Activated CD4-positive, alpha-beta T cell treated with anti-CD3 and anti-CD28 coated beads for 36 hours (primary cell): ENCODE measurements at regions of chr2 and their contacts with region 1.

Region 1: DNA sequence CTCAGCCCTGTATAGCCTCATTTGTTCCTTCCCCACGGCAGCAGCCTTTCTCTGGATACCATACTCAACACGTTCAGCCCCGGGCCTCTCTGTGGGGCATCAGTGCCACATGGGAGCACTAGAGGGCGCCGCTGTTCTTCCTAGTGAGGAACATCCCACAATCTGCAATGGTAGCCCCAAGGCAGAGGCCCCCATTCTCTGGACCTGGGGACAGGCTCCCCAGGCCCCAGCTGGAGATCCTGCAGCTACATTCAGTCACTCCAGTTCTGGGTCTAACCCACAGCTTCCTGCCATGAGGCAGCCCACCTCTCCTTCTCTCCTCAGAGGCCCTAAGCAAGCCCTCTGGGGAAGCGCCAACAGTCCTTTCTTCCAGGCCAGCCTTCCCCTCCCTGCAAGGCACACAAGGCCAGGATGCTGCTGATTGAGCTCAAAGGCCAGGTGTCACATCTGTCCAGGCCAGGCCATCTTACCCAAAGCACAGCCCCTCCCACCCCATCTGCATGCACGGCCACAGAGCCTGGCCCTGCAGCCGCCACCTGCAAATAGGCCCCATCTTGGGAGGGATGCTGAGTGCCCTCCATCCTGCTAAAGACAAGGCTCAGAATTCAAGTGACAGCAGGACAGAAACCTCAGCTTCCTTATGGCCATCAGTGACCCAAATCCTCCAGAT is 14.3 kb upstream of the SFXN5 start:
- DNase-seq: peak; percentile 91
- ATAC-seq: peak; percentile 98
- H3K4me3 Mint-ChIP-seq: no peak overlapping the region
- H3K27ac Mint-ChIP-seq: no peak overlapping the region
- H3K4me1 Mint-ChIP-seq: no peaks in the 10 kb centered on the region
- H3K27me3 Mint-ChIP-seq: no peaks in the 10 kb centered on the region

Region 2: DNA sequence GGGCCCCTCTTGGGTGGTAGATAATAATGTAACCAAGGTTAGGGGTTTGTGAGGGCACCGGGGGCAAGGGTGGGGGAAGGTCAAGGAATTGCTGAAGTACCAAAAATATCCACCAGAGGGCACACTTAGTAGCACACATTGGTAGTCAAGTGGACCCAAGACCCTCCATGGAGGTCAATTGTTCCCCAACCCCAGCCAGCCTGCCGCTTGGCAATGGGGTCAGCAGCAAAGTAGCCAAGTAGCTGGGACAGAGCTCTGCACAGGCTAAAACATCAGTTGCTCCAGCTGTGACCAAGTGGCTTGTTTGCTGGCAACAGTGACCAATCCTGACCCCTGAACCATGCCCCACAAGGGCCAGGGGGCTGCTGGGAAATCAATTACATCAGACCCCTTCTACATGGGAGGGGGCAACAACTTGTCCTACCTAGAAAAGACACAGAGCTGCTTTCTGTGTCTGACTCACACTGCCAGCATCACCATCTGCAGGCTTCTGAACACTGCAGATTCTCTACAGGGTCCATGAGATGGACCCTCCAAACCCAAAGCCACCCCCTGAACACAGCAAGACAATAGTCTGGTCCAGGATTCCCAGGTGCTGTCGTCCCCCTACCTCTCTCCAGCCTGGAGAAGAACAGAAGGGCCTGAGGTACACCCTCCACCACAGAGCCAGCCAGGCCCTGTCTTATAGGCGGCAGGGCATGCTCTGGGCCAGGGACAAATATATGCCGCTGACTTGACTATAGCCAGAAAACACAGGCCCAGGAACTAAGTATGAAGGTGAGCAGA is 92.5 kb before region 1 on chr2:
- CTCF ChIA-PET with region 1: interaction called, 5 read pairs
- POLR2A ChIA-PET with region 1: no interaction called
- intact Hi-C with region 1: loop called in 1 of 2 experiments (anchors 5 kb)
- DNase-seq: peak; percentile 50
- ATAC-seq: peak; percentile 42
- H3K4me3 Mint-ChIP-seq: no peak overlapping the region
- H3K27ac Mint-ChIP-seq: no peak overlapping the region
- H3K4me1 Mint-ChIP-seq: no peaks in the 10 kb centered on the region
- H3K27me3 Mint-ChIP-seq: no peaks in the 10 kb centered on the region

Region 3: DNA sequence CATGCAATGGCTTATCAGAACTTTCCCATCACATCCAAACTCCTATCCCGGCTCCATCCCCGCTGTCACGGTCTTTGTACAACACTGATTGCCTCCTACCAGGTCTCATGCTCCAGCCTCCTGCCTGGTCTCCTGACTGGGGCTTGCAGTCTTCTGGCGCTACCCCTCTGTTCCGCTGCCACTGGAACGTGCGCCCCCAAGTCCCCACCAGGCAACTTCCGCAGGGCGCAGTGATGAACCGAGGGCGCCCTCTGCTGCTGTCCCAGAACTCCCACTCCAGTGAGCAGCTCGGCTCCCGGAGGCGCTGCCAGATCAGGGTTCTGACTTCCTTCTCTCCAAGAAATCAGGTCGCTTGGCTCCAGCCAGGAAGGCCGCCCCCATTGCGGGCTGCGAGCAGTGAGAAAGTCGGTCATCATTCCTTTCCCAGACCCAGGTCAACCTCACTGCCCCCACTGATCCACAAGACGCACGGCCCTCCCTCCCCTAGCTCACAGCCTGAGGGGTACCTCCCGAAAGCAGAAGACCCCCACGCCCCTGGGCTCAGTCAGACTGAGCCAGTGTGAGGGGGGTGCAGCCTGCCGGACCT is 70.8 kb after region 1 on chr2:
- CTCF ChIA-PET with region 1: interaction called, 24 read pairs
- POLR2A ChIA-PET with region 1: no interaction called
- intact Hi-C with region 1: loop called (anchors 1 kb)
- DNase-seq: peak; percentile 73
- ATAC-seq: peak; percentile 61
- H3K4me3 Mint-ChIP-seq: no peak overlapping the region
- H3K27ac Mint-ChIP-seq: no peak overlapping the region
- H3K4me1 Mint-ChIP-seq: no peaks in the 10 kb centered on the region
- H3K27me3 Mint-ChIP-seq: peaks cover 31% of the 10 kb centered on the region

Region 4: GRCh38 chr2:73163483-73164367 is 77.9 kb after region 1 on chr2:
- CTCF ChIA-PET with region 1: interaction called, 6 read pairs
- POLR2A ChIA-PET with region 1: no interaction called
- intact Hi-C with region 1: loop called (anchors 1 kb)
- DNase-seq: peak; percentile 81
- ATAC-seq: peak; percentile 97
- H3K4me3 Mint-ChIP-seq: no peak overlapping the region
- H3K27ac Mint-ChIP-seq: no peak overlapping the region
- H3K4me1 Mint-ChIP-seq: no peaks in the 10 kb centered on the region
- H3K27me3 Mint-ChIP-seq: peaks cover 11% of the 10 kb centered on the region